Activated CD4-positive, alpha-beta T cell treated with anti-CD3 and anti-CD28 coated beads, Interleukin-2, amount 10 ng/mL, durations not matched to agents 24 days and 14 days (primary cell): ENCODE measurements at regions of chr5 and their contacts with region 1.

Region 1: GRCh38 chr5:33701251-33701650 is 190.5 kb downstream of the ADAMTS12 start:
- DNase-seq: no peak
- H3K4me3 Mint-ChIP-seq: no peak overlapping the region
- H3K27ac Mint-ChIP-seq: no peak overlapping the region
- H3K4me1 Mint-ChIP-seq: no peaks in the 10 kb centered on the region
- H3K27me3 Mint-ChIP-seq: no peaks in the 10 kb centered on the region

Region 2: DNA sequence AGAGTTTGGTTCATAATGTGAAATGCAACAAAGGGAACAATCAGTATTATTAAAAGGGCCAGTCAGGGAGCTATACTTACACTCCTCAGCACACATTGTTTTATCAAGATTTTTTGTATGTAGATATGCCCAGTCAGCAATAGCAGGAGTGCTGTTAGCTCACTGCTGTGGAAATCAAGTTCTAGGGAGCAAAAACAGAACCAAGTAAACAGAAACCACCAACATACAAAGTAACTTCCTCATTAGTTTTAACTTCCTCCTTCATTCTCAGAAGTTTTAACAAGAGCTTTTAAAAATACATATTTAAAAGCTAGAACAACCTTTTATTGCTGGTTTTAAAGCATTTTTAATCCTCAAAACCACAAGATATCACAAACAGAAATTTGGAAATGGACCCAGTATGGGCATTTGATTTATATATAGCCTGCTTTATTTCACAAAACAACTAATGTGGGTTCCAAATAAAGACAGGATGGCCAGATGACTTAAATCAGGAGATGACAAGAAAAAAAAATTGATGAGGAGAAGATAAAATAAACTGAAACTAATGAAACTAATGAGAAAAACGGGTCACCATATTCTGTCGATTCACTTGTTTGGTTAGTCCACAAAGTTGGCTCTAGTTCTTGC is 12.0 kb after region 1 on chr5:
- intact Hi-C with region 1: loop called (anchors 1 kb)
- DNase-seq: no peak
- H3K4me3 Mint-ChIP-seq: no peak overlapping the region
- H3K27ac Mint-ChIP-seq: no peak overlapping the region
- H3K4me1 Mint-ChIP-seq: no peaks in the 10 kb centered on the region
- H3K27me3 Mint-ChIP-seq: no peaks in the 10 kb centered on the region